ENCODE measurements at regions of chr17 and their contacts with region 1.

Region 1: GRCh38 chr17:38557836-38558727 is 47.7 kb downstream of the SRCIN1 start:
- DNase-seq: peak; percentile 86 to 87 (median 86)
- H3K4me3 ChIP-seq: peak overlapping the region; percentile 83 to 88
- H3K4me3 Mint-ChIP-seq: peak overlapping the region; percentile 89 to 98 (median 98)
- H3K27ac ChIP-seq: no peak overlapping the region
- H3K27ac Mint-ChIP-seq: peak overlapping the region in 6 of 7 donors; percentile 84 to 95 (median 92)
- H3K4me1 ChIP-seq: peaks cover 28% of the 10 kb centered on the region
- H3K4me1 Mint-ChIP-seq: peaks cover 8 to 40% (median 21%) of the 10 kb centered on the region in 4 donors
- H3K27me3 ChIP-seq: peaks cover 18% of the 10 kb centered on the region
- H3K27me3 Mint-ChIP-seq: peaks cover 10 to 11% of the 10 kb centered on the region in 2 donors

Region 2: DNA sequence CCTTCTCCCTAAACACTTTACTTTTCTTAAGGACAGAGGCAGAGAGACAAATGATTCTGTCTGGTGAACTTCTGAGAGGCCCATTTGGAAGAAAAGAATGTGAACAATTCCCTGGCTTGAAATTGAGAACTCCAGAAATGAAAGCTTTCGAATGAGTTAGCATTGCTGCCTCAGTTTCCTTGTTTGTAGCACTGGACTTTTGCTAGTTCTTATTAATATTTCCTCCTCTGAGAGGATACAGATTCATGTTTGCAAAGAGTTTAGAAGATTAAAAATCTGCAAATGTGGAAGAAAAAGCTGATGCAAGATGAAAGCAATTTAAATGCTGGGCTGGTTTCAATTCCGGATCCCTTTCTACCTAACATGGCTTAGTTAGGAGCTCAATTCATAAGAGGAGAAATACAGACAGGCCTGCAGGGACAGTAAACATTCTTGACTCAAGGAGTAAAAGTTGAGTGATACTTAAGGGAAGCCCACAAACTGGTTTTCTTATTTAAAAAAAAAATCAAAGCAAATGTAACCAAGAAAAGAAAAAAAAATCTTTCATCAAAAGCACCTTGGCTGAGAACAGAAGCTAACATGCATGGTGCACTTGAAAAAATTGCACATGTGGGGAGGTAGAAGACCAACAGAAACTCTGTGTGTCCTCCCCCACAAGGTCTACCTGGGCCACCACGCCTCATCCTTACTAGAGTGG is 840.3 kb before region 1 on chr17:
- CTCF ChIA-PET with region 1: no interaction called
- POLR2A ChIA-PET with region 1: no interaction called
- intact Hi-C with region 1: no loop called
- DNase-seq: no peak
- H3K4me3 ChIP-seq: no peak overlapping the region
- H3K4me3 Mint-ChIP-seq: no peak overlapping the region
- H3K27ac ChIP-seq: no peak overlapping the region
- H3K27ac Mint-ChIP-seq: no peak overlapping the region
- H3K4me1 ChIP-seq: no peaks in the 10 kb centered on the region
- H3K4me1 Mint-ChIP-seq: peaks cover 0 to 4% (median 0%) of the 10 kb centered on the region in 4 donors
- H3K27me3 ChIP-seq: no peaks in the 10 kb centered on the region
- H3K27me3 Mint-ChIP-seq: peaks cover 14 to 29% of the 10 kb centered on the region in 2 donors

Region 3: GRCh38 chr17:38317081-38317801 is 240.8 kb before region 1 on chr17:
- CTCF ChIA-PET with region 1: no interaction called
- POLR2A ChIA-PET with region 1: no interaction called
- intact Hi-C with region 1: no loop called
- DNase-seq: no peak
- H3K4me3 ChIP-seq: no peak overlapping the region
- H3K4me3 Mint-ChIP-seq: no peak overlapping the region
- H3K27ac ChIP-seq: no peak overlapping the region
- H3K27ac Mint-ChIP-seq: no peak overlapping the region
- H3K4me1 ChIP-seq: no peaks in the 10 kb centered on the region
- H3K4me1 Mint-ChIP-seq: no peaks in the 10 kb centered on the region
- H3K27me3 ChIP-seq: no peaks in the 10 kb centered on the region
- H3K27me3 Mint-ChIP-seq: no peaks in the 10 kb centered on the region

Region 4: GRCh38 chr17:38535886-38536285 is 22.2 kb before region 1 on chr17:
- CTCF ChIA-PET with region 1: no interaction called
- POLR2A ChIA-PET with region 1: no interaction called
- intact Hi-C with region 1: no loop called
- DNase-seq: no peak
- H3K4me3 ChIP-seq: no peak overlapping the region
- H3K4me3 Mint-ChIP-seq: no peak overlapping the region
- H3K27ac ChIP-seq: no peak overlapping the region
- H3K27ac Mint-ChIP-seq: no peak overlapping the region
- H3K4me1 ChIP-seq: no peaks in the 10 kb centered on the region
- H3K4me1 Mint-ChIP-seq: no peaks in the 10 kb centered on the region
- H3K27me3 ChIP-seq: no peaks in the 10 kb centered on the region
- H3K27me3 Mint-ChIP-seq: peaks cover 17 to 31% of the 10 kb centered on the region in 2 donors

Region 5: DNA sequence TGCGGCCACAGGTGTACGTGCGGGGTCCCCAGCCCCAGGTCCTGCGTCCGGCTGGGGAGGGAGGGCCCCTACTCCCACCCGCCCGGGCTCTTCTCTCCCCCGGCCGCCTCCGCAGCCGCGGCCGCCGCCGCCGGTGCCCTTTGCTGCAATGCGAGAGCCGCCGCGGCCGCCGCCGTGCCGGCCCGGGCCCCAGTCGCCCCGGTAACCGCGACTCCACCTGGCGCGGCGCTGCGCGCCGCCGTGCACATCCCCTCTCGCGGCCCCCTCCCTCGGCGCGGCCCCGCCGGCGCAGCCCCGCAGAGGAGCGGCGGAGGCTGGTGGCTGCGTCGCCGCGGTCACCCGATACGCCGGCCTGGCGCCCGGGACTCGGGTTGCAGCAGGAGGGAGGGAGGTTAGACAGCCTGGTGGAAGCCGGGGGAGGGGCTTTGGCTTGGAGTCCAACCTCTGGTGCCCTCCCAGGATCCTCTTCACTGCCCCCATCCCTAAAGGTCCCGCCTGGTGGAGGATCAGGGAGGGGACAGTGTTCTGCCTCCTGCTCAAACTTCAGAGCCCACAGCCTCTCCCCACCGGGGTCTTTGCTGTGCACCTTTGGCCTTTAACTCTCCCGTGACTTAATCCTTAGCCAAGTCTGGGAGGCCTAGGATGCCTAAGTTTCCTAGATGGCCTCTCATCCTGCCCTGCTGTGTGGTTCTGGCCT is 14.7 kb after region 1 on chr17:
- CTCF ChIA-PET with region 1: interaction called, 18 read pairs
- POLR2A ChIA-PET with region 1: no interaction called
- intact Hi-C with region 1: loop called (anchors 2 kb)
- DNase-seq: peak in 1 of 5 donors; percentile 37
- H3K4me3 ChIP-seq: no peak overlapping the region
- H3K4me3 Mint-ChIP-seq: peak overlapping the region in 7 of 8 donors; percentile 18 to 75 (median 64)
- H3K27ac ChIP-seq: no peak overlapping the region
- H3K27ac Mint-ChIP-seq: no peak overlapping the region
- H3K4me1 ChIP-seq: peaks cover 5% of the 10 kb centered on the region
- H3K4me1 Mint-ChIP-seq: peaks cover 0 to 13% (median 2%) of the 10 kb centered on the region in 4 donors
- H3K27me3 ChIP-seq: peaks cover 51% of the 10 kb centered on the region
- H3K27me3 Mint-ChIP-seq: peaks cover 66 to 83% of the 10 kb centered on the region in 2 donors

Region 6: GRCh38 chr17:38584350-38584925 is 26.4 kb after region 1 on chr17:
- CTCF ChIA-PET with region 1: interaction called, 144 read pairs
- POLR2A ChIA-PET with region 1: interaction called, 6 read pairs
- intact Hi-C with region 1: loop called (anchors 1 kb)
- DNase-seq: peak in 4 of 5 donors; percentile 55 to 59 (median 58)
- H3K4me3 ChIP-seq: no peak overlapping the region
- H3K4me3 Mint-ChIP-seq: peak overlapping the region in 1 of 8 donors; percentile 52
- H3K27ac ChIP-seq: no peak overlapping the region
- H3K27ac Mint-ChIP-seq: peak overlapping the region in 2 of 7 donors; percentile 3 to 11
- H3K4me1 ChIP-seq: peaks cover 3% of the 10 kb centered on the region
- H3K4me1 Mint-ChIP-seq: peaks cover 6 to 27% (median 12%) of the 10 kb centered on the region in 4 donors
- H3K27me3 ChIP-seq: peaks cover 43% of the 10 kb centered on the region
- H3K27me3 Mint-ChIP-seq: peaks cover 52 to 68% of the 10 kb centered on the region in 2 donors

Region 7: DNA sequence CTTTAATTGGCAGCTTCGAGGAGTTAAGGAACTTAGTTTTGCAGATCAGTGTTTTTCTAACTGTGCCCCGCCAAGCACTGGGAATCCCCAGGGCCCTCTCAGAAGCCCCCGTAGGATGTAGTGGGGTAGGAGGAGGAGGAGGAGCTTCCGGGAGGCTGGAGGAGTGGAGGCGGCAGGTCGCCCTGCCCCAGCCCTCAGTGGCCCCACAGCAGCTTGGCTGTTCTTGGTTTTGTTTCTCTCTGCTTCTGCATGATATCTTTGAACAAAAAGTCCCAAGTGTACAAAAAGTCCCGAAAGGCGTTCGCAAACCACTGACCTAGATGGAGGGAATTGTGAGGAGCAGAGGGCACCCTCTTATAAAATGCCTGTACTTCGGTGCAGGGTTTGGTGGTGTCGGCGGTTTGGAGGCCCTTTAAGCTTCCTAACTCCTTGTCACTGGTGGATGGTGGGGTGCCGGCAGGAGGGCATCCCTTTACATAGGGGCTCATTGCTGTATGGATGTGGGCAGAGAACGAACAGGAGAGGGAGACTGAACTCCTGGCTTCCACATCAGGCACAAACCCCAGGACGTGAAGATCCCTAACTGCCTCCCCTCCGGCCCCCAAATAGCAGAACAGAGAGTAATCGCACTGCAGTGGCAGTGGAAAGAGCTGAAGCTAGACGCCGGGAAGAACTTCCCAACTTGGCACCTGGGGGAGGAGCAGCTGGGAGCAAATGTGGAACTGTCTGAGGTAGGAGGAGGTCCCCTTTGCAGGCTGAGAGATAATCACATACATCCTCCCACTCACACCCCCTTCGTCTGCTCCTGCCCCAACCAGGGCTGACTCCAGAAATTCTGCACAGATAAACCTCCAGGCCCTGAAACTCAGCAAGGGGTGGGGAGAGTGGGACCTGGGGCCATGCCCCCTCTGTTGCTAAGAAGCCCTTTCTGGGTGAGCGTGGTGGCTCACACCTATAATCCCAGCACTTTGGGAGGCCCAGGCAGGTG is 96.6 kb after region 1 on chr17:
- CTCF ChIA-PET with region 1: interaction called, 14 read pairs
- POLR2A ChIA-PET with region 1: interaction called, 3 read pairs
- intact Hi-C with region 1: no loop called
- DNase-seq: no peak
- H3K4me3 ChIP-seq: no peak overlapping the region
- H3K4me3 Mint-ChIP-seq: peak overlapping the region in 2 of 8 donors; percentile 14 to 59
- H3K27ac ChIP-seq: no peak overlapping the region
- H3K27ac Mint-ChIP-seq: no peak overlapping the region
- H3K4me1 ChIP-seq: peaks cover 11% of the 10 kb centered on the region
- H3K4me1 Mint-ChIP-seq: peaks cover 2 to 6% (median 3%) of the 10 kb centered on the region in 4 donors
- H3K27me3 ChIP-seq: peaks cover 11% of the 10 kb centered on the region
- H3K27me3 Mint-ChIP-seq: peaks cover 25 to 29% of the 10 kb centered on the region in 2 donors

Region 8: GRCh38 chr17:38674749-38675615 is 116.9 kb after region 1 on chr17 and contains the start of gene EPOP:
- CTCF ChIA-PET with region 1: interaction called, 121 read pairs
- POLR2A ChIA-PET with region 1: no interaction called
- intact Hi-C with region 1: loop called (anchors 2 kb)
- DNase-seq: peak; percentile 68 to 82 (median 74)
- H3K4me3 ChIP-seq: peak within 1 kb of the TSS in 1 of 2 donors; percentile 52
- H3K4me3 Mint-ChIP-seq: peak within 1 kb of the TSS; percentile 39 to 82 (median 73)
- H3K27ac ChIP-seq: peak within 1 kb of the TSS; percentile 9
- H3K27ac Mint-ChIP-seq: peak within 1 kb of the TSS in 4 of 7 donors; percentile 31 to 47 (median 40)
- H3K4me1 ChIP-seq: peaks cover 11% of the 10 kb centered on the region
- H3K4me1 Mint-ChIP-seq: peaks cover 5 to 25% (median 11%) of the 10 kb centered on the region in 4 donors
- H3K27me3 ChIP-seq: peaks cover 12% of the 10 kb centered on the region
- H3K27me3 Mint-ChIP-seq: peaks cover 17 to 30% of the 10 kb centered on the region in 2 donors
- total RNA-seq, gene EPOP: 0.09 to 0.25 TPM

Region 9: DNA sequence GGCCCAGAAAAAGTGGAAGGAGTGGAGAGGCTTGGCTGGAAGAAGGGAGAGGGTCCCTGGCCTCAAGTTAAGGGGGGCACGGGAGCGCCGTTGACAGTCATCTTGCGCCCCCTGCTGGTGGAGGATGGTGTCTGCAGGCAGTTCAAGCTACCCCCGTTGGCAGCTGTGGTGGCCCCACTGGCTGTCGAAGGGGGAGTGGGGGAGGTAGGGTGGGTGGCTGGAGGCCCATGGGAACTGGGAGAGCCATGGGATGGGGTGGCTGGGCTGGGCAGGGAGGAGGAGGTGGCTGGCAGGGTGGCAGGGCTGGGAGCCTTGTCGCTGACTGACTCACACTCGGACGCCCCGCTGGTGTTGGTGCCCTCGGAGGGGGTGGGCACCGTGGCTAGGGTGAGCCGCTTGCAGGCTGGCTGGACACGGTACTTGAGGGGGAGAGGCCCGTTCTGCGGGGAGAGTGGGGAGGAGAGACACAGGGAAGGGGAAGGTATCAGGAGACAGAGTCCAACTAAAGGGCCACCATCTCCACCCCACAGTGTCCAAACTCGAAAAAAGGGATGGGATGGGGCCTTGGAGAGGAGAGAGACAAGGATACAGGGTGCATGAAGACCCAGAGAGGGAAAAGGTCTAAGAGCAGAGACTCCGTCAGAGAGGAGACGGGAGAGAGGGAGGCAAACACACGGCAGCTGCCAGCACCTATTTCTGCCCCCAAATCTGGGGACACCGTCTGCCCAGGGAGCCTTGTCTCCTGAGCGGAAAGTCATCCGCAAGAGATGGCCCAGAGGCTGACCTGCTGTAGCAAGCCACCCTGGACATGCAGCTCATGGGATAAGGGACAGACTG is 177.3 kb after region 1 on chr17:
- CTCF ChIA-PET with region 1: interaction called, 25 read pairs
- POLR2A ChIA-PET with region 1: interaction called, 8 read pairs
- intact Hi-C with region 1: loop called (anchors 1 kb)
- DNase-seq: peak; percentile 57 to 66 (median 61)
- H3K4me3 ChIP-seq: no peak overlapping the region
- H3K4me3 Mint-ChIP-seq: no peak overlapping the region
- H3K27ac ChIP-seq: no peak overlapping the region
- H3K27ac Mint-ChIP-seq: peak overlapping the region in 2 of 7 donors; percentile 41 to 64
- H3K4me1 ChIP-seq: peaks cover 40% of the 10 kb centered on the region
- H3K4me1 Mint-ChIP-seq: peaks cover 19 to 51% (median 41%) of the 10 kb centered on the region in 4 donors
- H3K27me3 ChIP-seq: no peaks in the 10 kb centered on the region
- H3K27me3 Mint-ChIP-seq: peaks cover 0 to 2% of the 10 kb centered on the region in 2 donors

Region 10: GRCh38 chr17:38761612-38762011 is 203.5 kb after region 1 on chr17:
- CTCF ChIA-PET with region 1: no interaction called
- POLR2A ChIA-PET with region 1: no interaction called
- intact Hi-C with region 1: no loop called
- DNase-seq: peak in 1 of 5 donors; percentile 15
- H3K4me3 ChIP-seq: no peak overlapping the region
- H3K4me3 Mint-ChIP-seq: no peak overlapping the region
- H3K27ac ChIP-seq: no peak overlapping the region
- H3K27ac Mint-ChIP-seq: peak overlapping the region in 5 of 7 donors; percentile 64 to 85 (median 80)
- H3K4me1 ChIP-seq: peaks cover 3% of the 10 kb centered on the region
- H3K4me1 Mint-ChIP-seq: peaks cover 0 to 11% (median 7%) of the 10 kb centered on the region in 4 donors
- H3K27me3 ChIP-seq: no peaks in the 10 kb centered on the region
- H3K27me3 Mint-ChIP-seq: no peaks in the 10 kb centered on the region